Motor neuron (in vitro differentiated cells): ENCODE measurements at regions of chr15 and their contacts with region 1.

Region 1: GRCh38 chr15:38699633-38700230 is 135.1 kb upstream of the RASGRP1 start:
- ATAC-seq: peak in 3 of 8 experiments; percentile 64 to 83 (median 76)
- H3K4me3 ChIP-seq: no peak overlapping the region
- H3K27ac ChIP-seq: no peak overlapping the region
- H3K4me1 ChIP-seq: peaks cover 0 to 3% of the 10 kb centered on the region in 2 donors

Region 2: GRCh38 chr15:37995461-37996347 is 704.0 kb before region 1 on chr15:
- in situ Hi-C with region 1: loop called in 4 of 9 experiments (anchors 25 kb)
- ATAC-seq: peak; percentile 69 to 90 (median 84)
- H3K4me3 ChIP-seq: no peak overlapping the region
- H3K27ac ChIP-seq: no peak overlapping the region
- H3K4me1 ChIP-seq: no peaks in the 10 kb centered on the region

Region 3: DNA sequence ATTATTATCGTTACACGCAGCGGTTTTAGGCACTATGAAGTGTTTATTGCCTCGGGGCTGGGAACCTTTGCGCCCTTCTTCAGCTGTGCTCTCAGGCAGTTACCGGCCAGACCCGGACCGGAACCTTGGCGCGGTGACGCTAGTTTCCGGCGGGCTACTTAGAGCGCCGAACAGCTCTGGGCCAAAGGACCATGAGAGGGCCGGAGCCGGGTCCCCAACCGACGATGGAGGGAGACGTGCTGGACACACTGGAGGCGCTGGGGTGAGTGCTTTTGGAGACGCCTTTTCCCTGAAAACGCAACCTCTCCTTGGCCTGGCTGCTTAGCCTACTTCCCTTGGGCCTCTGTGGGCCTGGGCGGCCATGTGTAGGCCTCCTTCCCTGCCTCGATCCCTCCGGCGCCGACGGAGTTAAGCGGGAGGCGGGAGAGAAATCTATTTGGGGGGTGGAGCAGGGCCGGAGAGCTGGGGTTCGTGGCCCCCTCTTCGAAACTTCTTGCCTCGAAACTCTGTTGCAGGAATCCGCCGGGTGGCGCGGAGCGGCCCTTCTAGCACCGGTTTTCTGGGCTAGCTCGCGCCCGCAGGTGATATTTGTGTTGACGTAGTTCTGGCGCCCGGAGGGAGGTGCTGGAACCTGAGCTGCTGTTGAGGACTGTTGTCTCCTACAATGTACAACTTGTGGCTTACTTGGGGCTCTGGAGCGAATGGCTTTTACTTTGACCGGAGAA is 245.6 kb before region 1 on chr15 and contains the start of gene FAM98B:
- in situ Hi-C with region 1: loop called in 4 of 9 experiments (anchors 25 kb)
- ATAC-seq: peak; percentile 85 to 96 (median 94)
- H3K4me3 ChIP-seq: peak within 1 kb of the TSS; percentile 80 to 97 (median 94)
- H3K27ac ChIP-seq: peak within 1 kb of the TSS; percentile 90 to 94
- H3K4me1 ChIP-seq: peaks cover 4 to 6% of the 10 kb centered on the region in 2 donors
- total RNA-seq, gene FAM98B: 8.4 to 32.4 (median 11.4) TPM

Region 4: DNA sequence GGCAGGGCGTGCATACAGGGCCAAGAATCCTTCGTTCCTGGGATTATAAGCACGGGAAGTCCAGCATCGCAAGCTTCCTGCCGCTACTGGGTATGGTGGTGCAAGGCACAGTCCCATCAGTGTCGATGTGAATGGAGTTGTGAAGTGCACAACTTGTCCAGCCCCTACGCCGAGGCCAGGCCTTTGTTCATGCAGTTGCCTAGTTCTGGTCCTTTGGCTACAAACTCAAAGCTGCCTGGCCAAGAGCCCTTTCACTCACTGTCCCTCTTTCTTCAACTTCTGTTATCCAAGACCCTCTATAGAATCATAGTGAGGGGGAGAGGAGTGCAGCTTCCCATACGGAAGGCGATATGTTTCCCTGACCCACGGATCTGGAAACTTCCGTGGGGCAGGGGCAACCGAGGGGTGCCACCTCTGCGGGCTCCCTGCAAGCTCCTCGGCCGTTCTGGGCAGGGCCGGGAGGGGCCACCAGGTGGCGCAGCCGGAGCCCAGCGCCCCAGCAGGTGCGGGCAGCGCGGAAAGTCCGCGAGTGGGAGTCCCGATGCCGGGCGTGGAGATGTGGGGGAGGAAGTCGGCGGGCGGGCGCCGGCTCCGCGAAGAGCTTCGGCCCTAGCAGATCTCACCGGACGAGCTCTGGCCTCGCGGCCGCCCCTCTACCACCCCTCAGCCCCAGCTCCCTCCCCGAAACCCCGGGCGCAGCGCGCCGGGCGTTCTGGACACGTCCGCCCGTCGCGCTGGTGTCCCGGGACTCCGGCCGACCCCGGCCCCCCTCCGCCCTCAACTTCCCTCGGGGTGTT is 135.8 kb before region 1 on chr15:
- in situ Hi-C with region 1: loop called in 1 of 9 experiments (anchors 25 kb)
- ATAC-seq: peak; percentile 74 to 88 (median 83)
- H3K4me3 ChIP-seq: peak overlapping the region; percentile 49 to 81 (median 52)
- H3K27ac ChIP-seq: no peak overlapping the region
- H3K4me1 ChIP-seq: no peaks in the 10 kb centered on the region

Region 5: DNA sequence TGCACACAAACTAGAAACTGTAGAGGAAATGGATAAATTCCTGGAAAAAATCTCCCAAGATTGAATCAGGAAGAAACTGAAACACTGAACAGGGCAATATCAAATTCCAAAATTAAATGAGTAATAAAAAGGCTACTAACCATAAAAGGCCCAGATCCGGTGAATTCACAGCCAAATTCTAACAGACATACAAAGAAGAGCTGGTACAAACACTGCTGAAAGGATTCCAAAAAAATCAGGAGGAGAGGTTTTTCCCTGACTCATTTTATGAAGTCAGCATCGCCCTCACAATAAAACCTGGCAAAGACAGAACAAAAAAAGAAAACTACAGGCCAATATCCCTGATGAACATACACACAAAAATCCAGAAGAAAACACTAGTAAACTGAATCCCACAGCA is 418.8 kb after region 1 on chr15:
- in situ Hi-C with region 1: loop called in 1 of 9 experiments (anchors 25 kb)
- ATAC-seq: no peak
- H3K4me3 ChIP-seq: no peak overlapping the region
- H3K27ac ChIP-seq: no peak overlapping the region
- H3K4me1 ChIP-seq: no peaks in the 10 kb centered on the region

Region 6: GRCh38 chr15:39756806-39757522 is 1057.2 kb after region 1 on chr15:
- in situ Hi-C with region 1: loop called in 4 of 9 experiments (anchors 25 kb)
- ATAC-seq: peak in 1 of 8 experiments; percentile 38
- H3K4me3 ChIP-seq: no peak overlapping the region
- H3K27ac ChIP-seq: no peak overlapping the region
- H3K4me1 ChIP-seq: no peaks in the 10 kb centered on the region